CD4-positive, alpha-beta T cell (primary cell): ENCODE measurements at regions of chr2 and their contacts with region 1.

Region 1: DNA sequence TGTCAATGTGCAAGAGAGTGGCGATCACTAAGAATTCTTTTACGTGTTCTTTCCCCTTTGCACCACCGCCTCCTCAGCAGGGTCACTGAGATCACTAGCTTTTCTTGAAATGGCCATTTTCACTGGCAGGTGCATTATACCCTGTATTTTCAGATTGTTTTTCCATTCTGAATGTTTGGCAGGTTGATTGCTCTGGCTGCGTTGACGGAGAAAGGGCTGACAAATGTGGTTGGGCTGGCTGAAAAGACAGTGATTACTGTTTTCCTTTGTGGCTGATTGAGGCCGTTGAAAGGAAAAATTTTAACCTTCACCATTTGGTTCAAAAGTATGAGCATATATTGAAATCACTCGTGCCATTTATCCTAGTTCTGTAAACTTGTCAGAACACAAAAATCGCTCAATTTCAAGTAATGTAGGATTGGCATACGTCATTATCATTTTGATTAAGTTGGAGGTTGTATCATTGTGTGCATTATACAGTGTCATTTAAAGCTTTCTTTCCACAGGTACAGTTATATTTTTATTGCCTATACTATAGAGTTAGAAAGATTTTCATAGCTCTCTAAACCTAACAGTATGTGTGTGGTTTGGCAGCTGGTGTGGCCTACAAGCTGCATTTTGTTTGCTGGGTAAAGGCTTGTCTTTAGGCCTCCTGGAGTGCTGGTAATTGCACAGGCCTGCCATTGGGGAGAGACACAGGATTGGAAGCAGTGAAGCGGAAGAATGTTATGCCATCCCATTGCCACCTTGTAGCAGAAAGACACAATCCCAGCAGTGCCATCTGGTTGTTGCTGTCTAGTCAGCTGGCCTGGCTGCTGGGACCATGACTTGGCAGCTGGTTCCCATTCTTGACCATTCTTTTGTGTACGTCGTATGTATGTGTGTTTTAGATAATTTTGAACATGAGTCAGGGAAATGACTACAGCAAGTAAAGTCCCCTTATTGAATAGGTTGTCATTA is 36.7 kb downstream of the DYNC1I2 start:
- DNase-seq: no peak
- ATAC-seq: no peak
- H3K4me3 ChIP-seq: no peak overlapping the region
- H3K4me3 Mint-ChIP-seq: no peak overlapping the region
- H3K27ac ChIP-seq: no peak overlapping the region
- H3K27ac Mint-ChIP-seq: no peak overlapping the region
- H3K4me1 ChIP-seq: no peaks in the 10 kb centered on the region
- H3K4me1 Mint-ChIP-seq: no peaks in the 10 kb centered on the region
- H3K27me3 ChIP-seq: no peaks in the 10 kb centered on the region
- H3K27me3 Mint-ChIP-seq: no peaks in the 10 kb centered on the region
- CTCF ChIP-seq: no peak

Region 2: GRCh38 chr2:171334171-171334570 is 389.8 kb before region 1 on chr2:
- CTCF ChIA-PET with region 1: no interaction called
- POLR2A ChIA-PET with region 1: no interaction called
- intact Hi-C with region 1: no loop called
- DNase-seq: no peak
- ATAC-seq: no peak
- H3K4me3 ChIP-seq: no peak overlapping the region
- H3K4me3 Mint-ChIP-seq: no peak overlapping the region
- H3K27ac ChIP-seq: no peak overlapping the region
- H3K27ac Mint-ChIP-seq: no peak overlapping the region
- H3K4me1 ChIP-seq: peaks cover 6% of the 10 kb centered on the region
- H3K4me1 Mint-ChIP-seq: peaks cover 8% of the 10 kb centered on the region
- H3K27me3 ChIP-seq: no peaks in the 10 kb centered on the region
- H3K27me3 Mint-ChIP-seq: no peaks in the 10 kb centered on the region
- CTCF ChIP-seq: no peak

Region 3: DNA sequence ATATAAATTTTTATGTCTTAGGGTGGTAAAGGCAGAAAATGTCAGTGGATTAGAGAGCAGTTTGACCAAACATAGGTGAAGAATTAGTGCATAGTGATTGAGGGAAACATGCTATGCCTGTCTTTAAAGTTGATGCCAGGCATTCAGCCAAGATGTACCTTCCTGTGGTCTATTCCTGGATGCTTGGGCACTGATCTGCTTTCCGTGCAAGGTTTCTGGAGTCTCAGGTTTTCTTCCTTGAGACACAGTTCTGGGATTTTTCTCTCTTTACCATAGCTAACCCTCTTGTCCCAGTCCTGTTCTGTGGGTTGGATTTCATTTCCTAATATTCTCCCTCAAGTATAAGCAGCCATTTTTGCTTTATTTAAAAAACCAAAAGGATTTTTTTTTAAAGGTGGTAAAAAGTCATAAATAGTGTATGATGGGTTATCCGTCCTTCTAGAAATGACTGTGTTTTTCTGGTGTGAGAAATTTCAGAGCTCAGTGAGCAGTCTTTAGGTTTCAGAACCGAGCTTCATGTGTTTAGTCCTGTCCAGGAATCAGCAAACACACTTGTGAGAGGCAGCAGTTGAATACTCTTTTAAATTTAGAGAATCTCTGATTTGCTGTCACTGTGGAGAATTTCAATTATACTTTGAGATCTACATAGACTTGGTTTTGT is 244.7 kb before region 1 on chr2:
- CTCF ChIA-PET with region 1: no interaction called
- POLR2A ChIA-PET with region 1: no interaction called
- intact Hi-C with region 1: loop called in 1 of 2 experiments (anchors 10 kb)
- DNase-seq: no peak
- ATAC-seq: no peak
- H3K4me3 ChIP-seq: no peak overlapping the region
- H3K4me3 Mint-ChIP-seq: no peak overlapping the region
- H3K27ac ChIP-seq: no peak overlapping the region
- H3K27ac Mint-ChIP-seq: no peak overlapping the region
- H3K4me1 ChIP-seq: no peaks in the 10 kb centered on the region
- H3K4me1 Mint-ChIP-seq: no peaks in the 10 kb centered on the region
- H3K27me3 ChIP-seq: no peaks in the 10 kb centered on the region
- H3K27me3 Mint-ChIP-seq: no peaks in the 10 kb centered on the region
- CTCF ChIP-seq: no peak

Region 4: GRCh38 chr2:171741189-171741588 is 17.2 kb after region 1 on chr2:
- CTCF ChIA-PET with region 1: no interaction called
- POLR2A ChIA-PET with region 1: no interaction called
- intact Hi-C with region 1: no loop called
- DNase-seq: no peak
- ATAC-seq: no peak
- H3K4me3 ChIP-seq: no peak overlapping the region
- H3K4me3 Mint-ChIP-seq: no peak overlapping the region
- H3K27ac ChIP-seq: no peak overlapping the region
- H3K27ac Mint-ChIP-seq: no peak overlapping the region
- H3K4me1 ChIP-seq: no peaks in the 10 kb centered on the region
- H3K4me1 Mint-ChIP-seq: no peaks in the 10 kb centered on the region
- H3K27me3 ChIP-seq: no peaks in the 10 kb centered on the region
- H3K27me3 Mint-ChIP-seq: no peaks in the 10 kb centered on the region
- CTCF ChIP-seq: no peak

Region 5: GRCh38 chr2:172234716-172235691 is 511.0 kb after region 1 on chr2:
- CTCF ChIA-PET with region 1: no interaction called
- POLR2A ChIA-PET with region 1: no interaction called
- intact Hi-C with region 1: no loop called
- DNase-seq: peak in 13 of 14 experiments; percentile 8 to 59 (median 30)
- ATAC-seq: peak; percentile 69
- H3K4me3 ChIP-seq: peak overlapping the region; percentile 59
- H3K4me3 Mint-ChIP-seq: peak overlapping the region; percentile 90
- H3K27ac ChIP-seq: no peak overlapping the region
- H3K27ac Mint-ChIP-seq: no peak overlapping the region
- H3K4me1 ChIP-seq: peaks cover 14% of the 10 kb centered on the region
- H3K4me1 Mint-ChIP-seq: peaks cover 14% of the 10 kb centered on the region
- H3K27me3 ChIP-seq: peaks cover 5 to 7% of the 10 kb centered on the region in 2 experiments
- H3K27me3 Mint-ChIP-seq: peaks cover 48% of the 10 kb centered on the region
- CTCF ChIP-seq: no peak